Stomach (tissue), 19 donors: ENCODE measurements at regions of chr22 and their contacts with region 1.

Region 1: GRCh38 chr22:19629720-19630419 is 84.4 kb upstream of the SEPTIN5 start:
- DNase-seq: peak; percentile 86 to 92
- H3K4me3 ChIP-seq: no peak overlapping the region
- H3K27ac ChIP-seq: no peak overlapping the region
- H3K4me1 ChIP-seq: no peaks in the 10 kb centered on the region
- H3K27me3 ChIP-seq: peaks cover 0 to 42% (median 0%) of the 10 kb centered on the region in 3 donors
- CTCF ChIP-seq: peak in 6 of 7 experiments; percentile 74 to 93 (median 84)
- EP300 ChIP-seq: no peak
- POLR2A ChIP-seq: no peak

Region 2: DNA sequence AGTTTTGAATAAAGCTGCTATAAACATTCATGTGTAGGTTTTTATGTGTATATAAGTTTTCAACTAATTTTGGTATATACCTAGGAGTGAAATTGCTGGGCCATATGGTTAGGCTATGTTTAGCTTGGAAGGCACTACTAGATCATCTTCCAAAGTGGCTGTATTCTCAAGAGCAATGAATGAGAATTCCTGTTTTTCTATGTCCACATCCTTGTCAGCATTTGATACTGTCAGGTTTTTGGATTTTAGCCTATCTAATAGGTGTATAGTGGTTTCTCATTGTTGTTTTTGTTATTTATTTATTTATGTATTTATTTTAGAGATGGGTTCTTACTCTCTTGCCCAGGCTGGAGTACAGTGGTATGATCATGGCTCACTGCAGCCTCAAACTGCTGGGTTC is 312.0 kb before region 1 on chr22:
- intact Hi-C with region 1: no loop called
- DNase-seq: no peak
- H3K4me3 ChIP-seq: no peak overlapping the region
- H3K27ac ChIP-seq: no peak overlapping the region
- H3K4me1 ChIP-seq: no peaks in the 10 kb centered on the region
- H3K27me3 ChIP-seq: no peaks in the 10 kb centered on the region
- CTCF ChIP-seq: no peak
- EP300 ChIP-seq: no peak
- POLR2A ChIP-seq: no peak

Region 3: GRCh38 chr22:19495562-19496323 is 134.1 kb before region 1 on chr22:
- intact Hi-C with region 1: loop called (anchors 5 kb)
- DNase-seq: peak in 1 of 2 donors; percentile 43
- H3K4me3 ChIP-seq: no peak overlapping the region
- H3K27ac ChIP-seq: no peak overlapping the region
- H3K4me1 ChIP-seq: no peaks in the 10 kb centered on the region
- H3K27me3 ChIP-seq: no peaks in the 10 kb centered on the region
- CTCF ChIP-seq: peak in 2 of 7 experiments; percentile 14 to 33
- EP300 ChIP-seq: no peak
- POLR2A ChIP-seq: no peak